HepG2 (cell line): ENCODE measurements at regions of chr15 and their contacts with region 1.

Region 1: GRCh38 chr15:39874890-39875549 is 45.0 kb downstream of the GPR176 start:
- DNase-seq: peak; percentile 17
- ATAC-seq: peak; percentile 57; the same call in 2 of the 3 replicates
- H3K4me3 ChIP-seq: no peak overlapping the region
- H3K27ac ChIP-seq: no peak overlapping the region
- H3K4me1 ChIP-seq: no peaks in the 10 kb centered on the region
- H3K27me3 ChIP-seq: no peaks in the 10 kb centered on the region
- CTCF ChIP-seq: peak; percentile 71
- EP300 ChIP-seq: no peak
- POLR2A ChIP-seq: no peak
- RAD21 ChIP-seq: no peak

Region 2: DNA sequence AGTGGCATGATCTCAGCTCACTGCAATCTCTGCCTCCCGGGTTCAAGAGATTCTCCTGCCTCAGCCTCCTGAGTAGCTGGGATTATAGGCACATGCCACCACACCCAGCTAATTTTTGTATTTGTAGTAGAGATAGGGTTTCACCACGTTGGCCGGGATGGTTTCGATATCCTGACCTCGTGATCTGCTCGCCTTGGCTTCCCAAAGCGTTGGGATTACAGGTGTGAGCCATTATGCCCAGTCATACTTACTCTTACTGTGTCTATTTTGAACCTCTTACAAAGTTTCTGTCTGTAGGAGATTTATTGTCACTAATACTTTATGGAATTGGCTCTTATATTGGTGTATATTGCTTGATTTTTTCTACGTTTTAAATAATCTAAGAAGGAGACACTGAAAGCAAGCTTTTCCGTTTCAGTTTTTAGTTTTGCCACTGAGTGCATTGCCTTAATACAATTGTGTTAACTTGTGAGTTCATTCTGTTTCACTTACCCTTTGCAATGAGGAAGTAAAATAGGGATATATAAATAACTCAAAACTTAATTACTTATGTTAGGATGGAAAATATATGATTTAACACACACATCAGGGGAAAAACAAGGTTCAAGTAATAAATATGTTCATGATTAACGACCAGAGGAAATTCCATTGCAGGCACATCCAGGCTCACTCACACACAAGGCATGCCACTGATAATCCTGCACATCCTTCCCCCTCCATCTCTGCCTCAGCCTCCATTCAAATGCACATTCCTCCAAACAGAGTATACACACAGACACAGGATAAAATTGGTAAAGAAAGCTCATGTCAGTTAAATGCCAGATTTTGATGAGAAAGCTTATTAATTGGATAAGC is 1031.1 kb before region 1 on chr15:
- CTCF ChIA-PET with region 1: no interaction called
- POLR2A ChIA-PET with region 1: no interaction called
- in situ Hi-C with region 1: no loop called
- intact Hi-C with region 1: no loop called
- DNase-seq: no peak
- ATAC-seq: no peak
- H3K4me3 ChIP-seq: no peak overlapping the region
- H3K27ac ChIP-seq: no peak overlapping the region
- H3K4me1 ChIP-seq: no peaks in the 10 kb centered on the region
- H3K27me3 ChIP-seq: no peaks in the 10 kb centered on the region
- CTCF ChIP-seq: no peak
- EP300 ChIP-seq: no peak
- POLR2A ChIP-seq: no peak
- RAD21 ChIP-seq: no peak

Region 3: GRCh38 chr15:39555885-39556284 is 319.1 kb before region 1 on chr15:
- CTCF ChIA-PET with region 1: no interaction called
- POLR2A ChIA-PET with region 1: no interaction called
- in situ Hi-C with region 1: no loop called
- intact Hi-C with region 1: no loop called
- DNase-seq: no peak
- ATAC-seq: 0 out of 3 replicates have a peak, but pooled peaks have one; percentile 40
- H3K4me3 ChIP-seq: no peak overlapping the region
- H3K27ac ChIP-seq: no peak overlapping the region
- H3K4me1 ChIP-seq: no peaks in the 10 kb centered on the region
- H3K27me3 ChIP-seq: no peaks in the 10 kb centered on the region
- CTCF ChIP-seq: no peak
- EP300 ChIP-seq: no peak
- POLR2A ChIP-seq: no peak
- RAD21 ChIP-seq: no peak

Region 4: GRCh38 chr15:39686000-39686613 is 188.9 kb before region 1 on chr15:
- CTCF ChIA-PET with region 1: no interaction called
- POLR2A ChIA-PET with region 1: no interaction called
- in situ Hi-C with region 1: no loop called
- intact Hi-C with region 1: loop called (anchors 2 kb)
- DNase-seq: peak; percentile 43
- ATAC-seq: peak; percentile 55; the same call in 2 of the 3 replicates
- H3K4me3 ChIP-seq: no peak overlapping the region
- H3K27ac ChIP-seq: no peak overlapping the region
- H3K4me1 ChIP-seq: no peaks in the 10 kb centered on the region
- H3K27me3 ChIP-seq: no peaks in the 10 kb centered on the region
- CTCF ChIP-seq: peak; percentile 74
- EP300 ChIP-seq: no peak
- POLR2A ChIP-seq: no peak
- RAD21 ChIP-seq: no peak

Region 5: DNA sequence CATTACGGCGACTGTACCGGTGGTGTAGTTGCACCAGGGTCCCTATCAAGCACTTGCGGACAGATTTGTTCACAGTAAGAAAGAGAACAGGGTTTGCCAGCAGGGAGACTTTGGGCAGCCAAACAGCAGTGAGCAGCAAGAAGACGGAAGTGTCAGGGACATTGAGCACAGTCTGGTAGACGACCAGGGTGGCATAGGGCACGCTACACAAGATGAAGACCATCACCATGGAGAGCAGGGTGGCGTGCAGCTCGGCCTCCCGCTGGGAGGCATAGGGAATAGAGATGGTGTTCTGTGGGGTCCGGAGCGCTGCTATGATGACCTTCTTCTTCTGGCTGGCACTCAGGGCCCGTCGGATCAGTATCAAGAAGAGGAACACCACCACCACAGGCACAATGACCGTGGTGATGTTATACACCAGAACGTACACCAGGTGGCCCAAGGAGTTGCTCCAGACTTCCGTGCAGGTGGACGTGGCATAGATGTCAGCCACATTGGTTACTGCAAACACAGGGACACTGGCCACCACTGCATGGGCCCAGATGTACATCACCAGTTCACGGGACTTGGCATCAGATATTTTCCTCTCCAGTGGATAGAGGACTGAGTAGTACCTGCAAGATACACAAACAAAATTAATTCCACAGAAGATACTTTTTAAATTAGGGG is 73.2 kb before region 1 on chr15:
- CTCF ChIA-PET with region 1: interaction called, 8 read pairs
- POLR2A ChIA-PET with region 1: no interaction called
- in situ Hi-C with region 1: no loop called
- intact Hi-C with region 1: loop called (anchors 1 kb)
- DNase-seq: peak; percentile 36
- ATAC-seq: peak; percentile 96
- H3K4me3 ChIP-seq: no peak overlapping the region
- H3K27ac ChIP-seq: no peak overlapping the region
- H3K4me1 ChIP-seq: no peaks in the 10 kb centered on the region
- H3K27me3 ChIP-seq: 0 out of 5 replicates have a peak, but pooled peaks cover 0 to 7% of the 10 kb centered on the region in 2 experiments
- CTCF ChIP-seq: peak; percentile 69
- EP300 ChIP-seq: no peak
- POLR2A ChIP-seq: no peak
- RAD21 ChIP-seq: 0 out of 2 replicates have a peak, but pooled peaks have one; percentile 26

Region 6: DNA sequence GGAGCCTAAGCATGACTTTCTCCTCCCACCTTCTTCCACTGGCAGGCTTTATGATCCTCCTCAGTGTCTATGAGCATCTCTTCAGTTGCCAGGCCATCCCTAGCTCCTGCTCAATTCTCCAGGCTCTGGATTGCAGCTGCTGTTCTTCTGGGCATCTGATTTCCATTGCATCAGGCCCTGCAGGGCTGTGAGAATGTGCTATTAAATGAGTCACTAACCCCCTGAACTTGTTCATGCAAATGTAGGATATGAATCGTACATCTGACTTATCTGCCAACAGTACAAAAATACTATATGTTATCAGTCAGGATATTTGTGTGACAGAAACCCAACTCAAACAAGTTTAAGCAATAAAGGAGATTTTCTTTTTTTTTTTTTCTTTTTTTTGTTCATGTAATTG is 33.2 kb after region 1 on chr15:
- CTCF ChIA-PET with region 1: no interaction called
- POLR2A ChIA-PET with region 1: no interaction called
- in situ Hi-C with region 1: no loop called
- intact Hi-C with region 1: loop called (anchors 1 kb)
- DNase-seq: no peak
- ATAC-seq: no peak
- H3K4me3 ChIP-seq: no peak overlapping the region
- H3K27ac ChIP-seq: no peak overlapping the region
- H3K4me1 ChIP-seq: peaks cover 5% of the 10 kb centered on the region; the same call in 1 of the 2 replicates
- H3K27me3 ChIP-seq: peaks cover 0 to 10% of the 10 kb centered on the region in 2 experiments; a peak in 3 of 5 replicates
- CTCF ChIP-seq: no peak
- EP300 ChIP-seq: no peak
- POLR2A ChIP-seq: no peak
- RAD21 ChIP-seq: no peak

Region 7: DNA sequence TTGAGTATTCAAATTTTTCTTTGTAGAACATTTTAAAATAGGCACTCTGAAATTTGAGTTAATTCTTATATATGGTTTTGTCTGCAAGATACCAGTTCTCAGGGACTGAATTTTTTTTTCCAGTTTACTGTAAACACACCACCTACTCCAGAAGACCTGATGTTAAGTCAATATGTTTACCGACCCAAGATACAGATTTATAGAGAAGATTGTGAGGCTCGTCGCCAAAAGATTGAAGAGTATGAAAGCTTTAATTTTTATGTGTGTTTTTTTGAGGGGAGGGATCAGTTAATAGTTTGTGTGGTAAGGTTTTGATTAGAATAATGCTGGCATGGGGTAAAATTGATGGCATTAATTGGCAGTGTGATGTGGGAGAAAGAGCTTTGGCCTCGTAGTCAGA is 765.8 kb after region 1 on chr15:
- CTCF ChIA-PET with region 1: no interaction called
- POLR2A ChIA-PET with region 1: no interaction called
- in situ Hi-C with region 1: no loop called
- intact Hi-C with region 1: no loop called
- DNase-seq: no peak
- ATAC-seq: no peak
- H3K4me3 ChIP-seq: no peak overlapping the region
- H3K27ac ChIP-seq: no peak overlapping the region
- H3K4me1 ChIP-seq: no peaks in the 10 kb centered on the region
- H3K27me3 ChIP-seq: no peaks in the 10 kb centered on the region
- CTCF ChIP-seq: no peak
- EP300 ChIP-seq: no peak
- POLR2A ChIP-seq: no peak
- RAD21 ChIP-seq: no peak